Mammary epithelial cell (primary cell): ENCODE measurements at regions of chrX and their contacts with region 1.

Region 1: DNA sequence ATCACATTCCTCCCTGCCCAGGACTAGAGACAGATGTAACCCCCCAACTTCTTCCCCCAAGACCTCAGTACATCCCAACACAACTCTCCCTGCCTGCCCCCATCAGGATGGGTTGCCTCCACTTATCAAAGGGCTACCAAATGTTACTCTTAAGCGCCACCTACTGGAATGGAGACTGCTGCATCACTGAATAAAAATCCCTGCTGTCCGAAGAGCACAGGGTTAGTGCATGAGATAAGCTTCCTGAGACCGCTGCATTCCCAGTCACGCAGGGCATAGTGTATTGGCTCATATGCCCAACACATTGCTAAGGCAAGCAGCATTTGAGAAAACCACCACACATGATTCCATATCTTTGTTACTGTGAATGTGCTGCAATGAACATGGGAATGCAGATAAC is 544.5 kb downstream of the PPP4R3C start:
- DNase-seq: peak; percentile 9
- H3K4me3 ChIP-seq: no peak overlapping the region
- H3K27ac ChIP-seq: no peak overlapping the region
- H3K4me1 ChIP-seq: peaks cover 16% of the 10 kb centered on the region
- H3K27me3 ChIP-seq: no peaks in the 10 kb centered on the region
- CTCF ChIP-seq: peak; percentile 52 to 69

Region 2: DNA sequence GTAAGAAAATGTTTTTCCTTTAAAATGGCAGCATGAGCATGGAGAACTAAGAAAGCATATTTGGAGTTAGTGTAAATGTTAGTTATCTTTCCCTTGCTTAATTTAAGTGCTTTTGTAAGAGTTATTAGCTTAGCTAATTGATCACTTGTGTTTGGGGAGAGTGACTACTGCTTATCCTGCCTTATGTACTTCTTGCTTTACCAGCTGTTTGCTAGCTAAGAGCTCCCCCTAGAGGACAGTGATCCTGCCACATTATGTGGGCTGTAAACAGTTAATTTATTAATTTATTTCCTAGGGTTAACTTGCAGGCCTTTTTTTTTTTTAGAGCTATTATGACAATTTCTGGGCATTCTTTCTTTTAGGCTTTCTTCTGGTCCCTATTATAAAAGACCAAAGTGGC is 266.9 kb before region 1 on chrX:
- CTCF ChIA-PET with region 1: no interaction called
- dilution Hi-C with region 1: no loop called
- in situ Hi-C with region 1: no loop called
- intact Hi-C with region 1: loop called (anchors 10 kb)
- DNase-seq: no peak
- H3K4me3 ChIP-seq: no peak overlapping the region
- H3K27ac ChIP-seq: no peak overlapping the region
- H3K4me1 ChIP-seq: no peaks in the 10 kb centered on the region
- H3K27me3 ChIP-seq: no peaks in the 10 kb centered on the region
- CTCF ChIP-seq: peak; percentile 36 to 52

Region 3: DNA sequence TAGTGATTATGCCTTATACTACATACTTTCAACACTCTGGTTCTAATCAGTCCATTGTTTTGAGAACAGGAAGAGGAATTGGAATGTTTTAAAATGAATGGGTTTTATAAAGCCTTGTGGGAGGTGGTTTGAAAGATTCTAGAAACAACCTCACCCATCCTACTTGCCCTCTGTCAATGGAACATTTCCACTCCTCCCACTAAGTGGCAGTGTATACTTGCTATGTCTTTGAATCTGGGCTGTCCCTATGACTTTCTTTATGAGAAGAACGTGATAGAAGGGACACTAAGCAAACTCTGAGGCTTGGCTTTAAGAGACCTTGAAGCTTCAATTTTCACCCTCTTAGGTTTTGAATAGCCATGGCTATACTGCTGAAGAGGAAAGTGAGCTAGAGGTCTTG is 66.7 kb before region 1 on chrX:
- CTCF ChIA-PET with region 1: no interaction called
- dilution Hi-C with region 1: no loop called
- in situ Hi-C with region 1: no loop called
- intact Hi-C with region 1: loop called (anchors 1 kb)
- DNase-seq: peak; percentile 10
- H3K4me3 ChIP-seq: no peak overlapping the region
- H3K27ac ChIP-seq: no peak overlapping the region
- H3K4me1 ChIP-seq: no peaks in the 10 kb centered on the region
- H3K27me3 ChIP-seq: peaks cover 2% of the 10 kb centered on the region
- CTCF ChIP-seq: peak; percentile 16 to 61

Region 4: GRCh38 chrX:26871967-26872366 is 46.7 kb before region 1 on chrX:
- CTCF ChIA-PET with region 1: no interaction called
- dilution Hi-C with region 1: no loop called
- in situ Hi-C with region 1: no loop called
- intact Hi-C with region 1: no loop called
- DNase-seq: no peak
- H3K4me3 ChIP-seq: no peak overlapping the region
- H3K27ac ChIP-seq: no peak overlapping the region
- H3K4me1 ChIP-seq: no peaks in the 10 kb centered on the region
- H3K27me3 ChIP-seq: no peaks in the 10 kb centered on the region
- CTCF ChIP-seq: no peak

Region 5: GRCh38 chrX:27186664-27187063 is 268.0 kb after region 1 on chrX:
- CTCF ChIA-PET with region 1: no interaction called
- dilution Hi-C with region 1: no loop called
- in situ Hi-C with region 1: no loop called
- intact Hi-C with region 1: loop called (anchors 5 kb)
- DNase-seq: peak; percentile 34
- H3K4me3 ChIP-seq: no peak overlapping the region
- H3K27ac ChIP-seq: no peak overlapping the region
- H3K4me1 ChIP-seq: no peaks in the 10 kb centered on the region
- H3K27me3 ChIP-seq: no peaks in the 10 kb centered on the region
- CTCF ChIP-seq: peak; percentile 81